ENCODE measurements at regions of chr5 and their contacts with region 1.

Region 1: DNA sequence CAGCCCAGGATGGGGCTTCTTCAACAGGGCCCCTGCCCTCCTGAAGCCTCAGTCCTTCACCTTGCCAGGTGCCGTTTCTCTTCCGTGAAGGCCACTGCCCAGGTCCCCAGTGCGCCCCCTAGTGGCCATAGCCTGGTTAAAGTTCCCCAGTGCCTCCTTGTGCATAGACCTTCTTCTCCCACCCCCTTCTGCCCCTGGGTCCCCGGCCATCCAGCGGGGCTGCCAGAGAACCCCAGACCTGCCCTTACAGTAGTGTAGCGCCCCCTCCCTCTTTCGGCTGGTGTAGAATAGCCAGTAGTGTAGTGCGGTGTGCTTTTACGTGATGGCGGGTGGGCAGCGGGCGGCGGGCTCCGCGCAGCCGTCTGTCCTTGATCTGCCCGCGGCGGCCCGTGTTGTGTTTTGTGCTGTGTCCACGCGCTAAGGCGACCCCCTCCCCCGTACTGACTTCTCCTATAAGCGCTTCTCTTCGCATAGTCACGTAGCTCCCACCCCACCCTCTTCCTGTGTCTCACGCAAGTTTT is 23.6 kb downstream of the PCDHGC5 start:
- DNase-seq: peak; percentile 93 to 99
- H3K4me3 ChIP-seq: peak overlapping the region; percentile 61 to 83 (median 76)
- H3K27ac ChIP-seq: no peak overlapping the region
- H3K4me1 ChIP-seq: peaks cover 7 to 35% (median 19%) of the 10 kb centered on the region in 4 experiments
- H3K27me3 ChIP-seq: no peaks in the 10 kb centered on the region
- CTCF ChIP-seq: peak in 2 of 3 experiments; percentile 97 to 98; a peak in 3 of 4 replicates
- EP300 ChIP-seq: no peak; a peak in 1 of 3 replicates
- POLR2A ChIP-seq: peak in 1 of 2 experiments; percentile 60; a peak in 2 of 3 replicates
- RAD21 ChIP-seq: peak; percentile 80 to 86

Region 2: DNA sequence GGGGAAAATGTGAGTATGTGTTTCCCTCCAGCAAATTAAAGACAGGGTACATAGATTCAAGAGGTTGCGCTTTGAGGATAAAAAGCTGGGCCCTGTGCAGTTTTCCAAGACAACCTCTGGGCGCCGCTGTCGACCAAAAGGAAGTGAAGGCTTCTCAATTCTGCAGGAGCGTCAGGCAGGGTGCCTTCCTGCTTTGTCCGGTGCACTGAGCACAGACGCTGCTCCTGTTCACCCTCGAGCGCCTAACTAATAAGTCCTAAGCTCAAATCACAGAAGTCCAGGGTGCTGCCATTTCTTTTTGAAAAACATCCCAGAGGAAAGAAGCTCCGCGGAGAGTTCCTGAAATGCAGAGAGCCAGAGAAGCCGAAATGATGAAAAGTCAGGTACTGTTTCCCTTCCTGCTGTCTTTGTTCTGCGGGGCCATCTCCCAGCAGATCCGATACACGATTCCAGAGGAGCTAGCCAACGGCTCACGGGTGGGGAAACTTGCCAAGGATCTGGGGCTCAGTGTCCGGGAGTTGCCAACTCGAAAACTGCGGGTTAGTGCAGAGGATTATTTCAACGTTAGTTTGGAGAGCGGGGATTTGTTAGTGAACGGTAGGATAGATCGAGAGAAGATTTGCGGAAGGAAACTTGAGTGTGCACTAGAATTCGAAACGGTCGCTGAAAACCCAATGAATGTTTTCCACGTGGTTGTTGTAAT is 162.4 kb before region 1 on chr5 and contains the start of gene PCDHGB1:
- CTCF ChIA-PET with region 1: interaction called, 14 read pairs
- POLR2A ChIA-PET with region 1: interaction called, 3 read pairs
- DNase-seq: peak in 1 of 2 experiments; percentile 83
- H3K4me3 ChIP-seq: peak within 1 kb of the TSS; percentile 17 to 53 (median 31); a peak in 7 of 8 replicates
- H3K27ac ChIP-seq: no peak within 1 kb of the TSS
- H3K4me1 ChIP-seq: peaks cover 0 to 5% (median under 1%) of the 10 kb centered on the region in 4 experiments; a peak in 1 of 7 replicates
- H3K27me3 ChIP-seq: no peaks in the 10 kb centered on the region
- CTCF ChIP-seq: peak; percentile 69 to 86 (median 75)
- EP300 ChIP-seq: no peak
- POLR2A ChIP-seq: peak in 1 of 2 experiments; percentile 65; a peak in 1 of 3 replicates
- RAD21 ChIP-seq: peak; percentile 74 to 81
- total RNA-seq, gene PCDHGB1: 2.8 and 3.9 TPM in 2 replicates

Region 3: DNA sequence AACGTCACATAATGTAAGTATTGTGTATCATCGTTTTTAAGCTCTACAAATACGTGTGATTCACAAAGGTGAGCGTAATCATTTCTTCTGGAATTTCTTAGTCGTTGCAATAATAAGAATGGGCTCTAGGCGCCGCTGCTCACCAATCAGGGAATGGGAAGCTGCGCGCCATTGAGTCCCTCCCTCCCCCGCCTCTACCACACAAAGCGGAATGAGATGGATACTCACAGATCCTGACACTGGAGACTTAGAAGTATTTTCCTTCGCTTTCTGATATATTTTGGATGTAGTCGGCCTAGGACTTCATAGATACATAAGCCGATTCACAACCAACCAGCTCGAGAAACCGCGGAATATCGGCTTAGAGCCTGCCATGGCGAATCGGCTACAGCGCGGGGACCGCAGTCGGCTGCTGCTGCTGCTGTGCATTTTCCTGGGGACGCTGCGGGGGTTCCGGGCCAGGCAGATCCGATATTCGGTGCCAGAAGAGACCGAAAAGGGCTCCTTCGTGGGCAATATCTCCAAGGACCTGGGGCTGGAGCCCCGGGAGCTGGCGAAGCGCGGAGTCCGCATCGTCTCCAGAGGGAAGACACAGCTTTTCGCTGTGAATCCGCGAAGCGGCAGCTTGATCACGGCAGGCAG is 91.5 kb before region 1 on chr5 and contains the start of gene PCDHGA11:
- CTCF ChIA-PET with region 1: interaction called, 1,236 read pairs
- POLR2A ChIA-PET with region 1: interaction called, 14 read pairs
- DNase-seq: peak in 1 of 2 experiments; percentile 91
- H3K4me3 ChIP-seq: peak within 1 kb of the TSS; percentile 15 to 52 (median 32); a peak in 6 of 8 replicates
- H3K27ac ChIP-seq: no peak within 1 kb of the TSS
- H3K4me1 ChIP-seq: no peaks in the 10 kb centered on the region; a peak in 1 of 7 replicates
- H3K27me3 ChIP-seq: peaks cover 0 to 12% (median 6%) of the 10 kb centered on the region in 4 experiments; a peak in 4 of 7 replicates
- CTCF ChIP-seq: peak; percentile 59 to 77 (median 75)
- EP300 ChIP-seq: no peak
- POLR2A ChIP-seq: no peak
- RAD21 ChIP-seq: peak; percentile 88 to 90
- total RNA-seq, gene PCDHGA11: 8.2 and 8.3 TPM in 2 replicates

Region 4: GRCh38 chr5:141475625-141476131 is 36.8 kb before region 1 on chr5 and contains the start of gene PCDHGC3:
- CTCF ChIA-PET with region 1: interaction called, 218 read pairs
- POLR2A ChIA-PET with region 1: interaction called, 4 read pairs
- DNase-seq: peak in 1 of 2 experiments; percentile 86
- H3K4me3 ChIP-seq: peak within 1 kb of the TSS; percentile 68 to 85 (median 74)
- H3K27ac ChIP-seq: no peak within 1 kb of the TSS
- H3K4me1 ChIP-seq: peaks cover 0 to 5% (median 3%) of the 10 kb centered on the region in 4 experiments; a peak in 4 of 7 replicates
- H3K27me3 ChIP-seq: peaks cover 11 to 24% (median 23%) of the 10 kb centered on the region in 4 experiments
- CTCF ChIP-seq: peak; percentile 31 to 63 (median 49); a peak in 3 of 4 replicates
- EP300 ChIP-seq: no peak
- POLR2A ChIP-seq: no peak
- RAD21 ChIP-seq: peak; percentile 58 to 70
- total RNA-seq, gene PCDHGC3: 18.6 and 19.6 TPM in 2 replicates

Region 5: DNA sequence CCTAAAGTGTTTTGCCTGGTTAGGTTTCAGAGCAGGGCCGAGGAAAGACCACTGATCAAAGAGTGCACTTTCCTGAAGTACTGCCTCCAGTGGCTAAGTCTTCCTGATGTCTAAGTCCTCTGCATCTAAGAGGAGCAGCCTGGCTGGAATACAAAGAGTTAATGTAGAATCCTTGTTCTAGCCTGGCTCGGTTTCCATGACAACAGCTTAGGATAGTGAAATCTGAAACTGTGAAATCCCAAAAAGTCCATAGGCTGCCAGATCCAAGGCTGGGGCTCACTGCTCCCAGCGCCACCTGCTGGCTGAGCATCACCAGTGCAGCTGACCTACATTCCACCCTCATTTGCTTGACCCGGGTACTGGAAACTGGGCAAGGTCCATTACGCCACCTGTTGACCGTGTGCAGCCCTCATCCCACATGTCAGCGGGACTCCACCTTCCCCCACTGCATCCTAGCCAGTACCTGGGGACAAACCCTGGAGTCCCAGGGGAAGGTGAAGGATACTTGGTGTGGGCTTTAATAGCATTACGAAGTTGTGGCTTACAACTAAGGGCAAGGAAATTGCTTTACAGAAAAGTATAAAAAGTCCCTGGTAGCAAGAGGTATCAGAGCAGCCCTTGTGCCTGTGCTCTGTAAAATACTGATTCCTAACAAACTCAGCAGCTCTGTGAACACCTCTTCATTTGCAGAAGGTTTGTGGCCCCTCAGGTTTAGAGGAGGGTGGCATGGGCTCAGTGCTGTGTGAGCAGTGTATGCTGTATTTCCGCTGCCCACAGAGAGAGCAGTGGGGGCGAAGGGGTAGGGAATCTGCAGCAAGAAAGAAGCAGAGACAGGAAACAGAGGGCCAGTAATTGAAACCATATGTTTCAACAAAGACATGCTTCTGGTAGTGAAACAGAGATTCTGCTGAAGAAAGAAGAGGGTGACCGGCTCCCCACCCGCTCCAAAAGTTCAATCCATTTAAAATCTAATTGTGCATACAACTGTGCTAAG is 12.5 kb after region 1 on chr5:
- CTCF ChIA-PET with region 1: interaction called, 178 read pairs
- POLR2A ChIA-PET with region 1: interaction called, 29 read pairs
- DNase-seq: peak; percentile 90 to 95
- H3K4me3 ChIP-seq: no peak overlapping the region
- H3K27ac ChIP-seq: peak overlapping the region; percentile 26; the same call in 1 of the 2 replicates
- H3K4me1 ChIP-seq: peaks cover 2 to 15% (median 8%) of the 10 kb centered on the region in 4 experiments; a peak in 6 of 7 replicates
- H3K27me3 ChIP-seq: no peaks in the 10 kb centered on the region
- CTCF ChIP-seq: peak; percentile 99 to 100 (median 99)
- EP300 ChIP-seq: peak in 1 of 2 experiments; percentile 68; a peak in 1 of 3 replicates
- POLR2A ChIP-seq: no peak
- RAD21 ChIP-seq: peak; percentile 90 to 91

Region 6: GRCh38 chr5:141585594-141585993 is 73.1 kb after region 1 on chr5:
- CTCF ChIA-PET with region 1: no interaction called
- POLR2A ChIA-PET with region 1: no interaction called
- DNase-seq: no peak
- H3K4me3 ChIP-seq: no peak overlapping the region
- H3K27ac ChIP-seq: no peak overlapping the region
- H3K4me1 ChIP-seq: no peaks in the 10 kb centered on the region
- H3K27me3 ChIP-seq: no peaks in the 10 kb centered on the region
- CTCF ChIP-seq: no peak
- EP300 ChIP-seq: no peak
- POLR2A ChIP-seq: no peak
- RAD21 ChIP-seq: no peak

Region 7: GRCh38 chr5:141633871-141634561 is 121.6 kb after region 1 on chr5:
- CTCF ChIA-PET with region 1: no interaction called
- POLR2A ChIA-PET with region 1: no interaction called
- DNase-seq: no peak
- H3K4me3 ChIP-seq: no peak overlapping the region
- H3K27ac ChIP-seq: no peak overlapping the region
- H3K4me1 ChIP-seq: peaks cover 0 to 5% (median 3%) of the 10 kb centered on the region in 4 experiments; a peak in 5 of 7 replicates
- H3K27me3 ChIP-seq: peaks cover 0 to 4% (median 0%) of the 10 kb centered on the region in 4 experiments; a peak in 1 of 7 replicates
- CTCF ChIP-seq: no peak
- EP300 ChIP-seq: no peak
- POLR2A ChIP-seq: no peak
- RAD21 ChIP-seq: no peak

Measured in H1 (cell line).